ENCODE measurements at regions of chr2 and their contacts with region 1.

Region 1: GRCh38 chr2:143162123-143162837 is 33.1 kb downstream of the ARHGAP15 start:
- DNase-seq: peak in 8 of 9 donors; percentile 9 to 76 (median 67)
- ATAC-seq: peak; percentile 97
- H3K4me3 ChIP-seq: no peak overlapping the region
- H3K4me3 Mint-ChIP-seq: peak overlapping the region in 7 of 10 donors; percentile 0 to 53 (median 6)
- H3K27ac ChIP-seq: peak overlapping the region; percentile 18
- H3K27ac Mint-ChIP-seq: peak overlapping the region in 8 of 9 donors; percentile 50 to 91 (median 82)
- H3K4me1 ChIP-seq: peaks cover 13 to 58% of the 10 kb centered on the region in 2 donors
- H3K4me1 Mint-ChIP-seq: peaks cover 64 to 98% (median 93%) of the 10 kb centered on the region in 7 donors
- H3K27me3 ChIP-seq: no peaks in the 10 kb centered on the region
- H3K27me3 Mint-ChIP-seq: no peaks in the 10 kb centered on the region

Region 2: DNA sequence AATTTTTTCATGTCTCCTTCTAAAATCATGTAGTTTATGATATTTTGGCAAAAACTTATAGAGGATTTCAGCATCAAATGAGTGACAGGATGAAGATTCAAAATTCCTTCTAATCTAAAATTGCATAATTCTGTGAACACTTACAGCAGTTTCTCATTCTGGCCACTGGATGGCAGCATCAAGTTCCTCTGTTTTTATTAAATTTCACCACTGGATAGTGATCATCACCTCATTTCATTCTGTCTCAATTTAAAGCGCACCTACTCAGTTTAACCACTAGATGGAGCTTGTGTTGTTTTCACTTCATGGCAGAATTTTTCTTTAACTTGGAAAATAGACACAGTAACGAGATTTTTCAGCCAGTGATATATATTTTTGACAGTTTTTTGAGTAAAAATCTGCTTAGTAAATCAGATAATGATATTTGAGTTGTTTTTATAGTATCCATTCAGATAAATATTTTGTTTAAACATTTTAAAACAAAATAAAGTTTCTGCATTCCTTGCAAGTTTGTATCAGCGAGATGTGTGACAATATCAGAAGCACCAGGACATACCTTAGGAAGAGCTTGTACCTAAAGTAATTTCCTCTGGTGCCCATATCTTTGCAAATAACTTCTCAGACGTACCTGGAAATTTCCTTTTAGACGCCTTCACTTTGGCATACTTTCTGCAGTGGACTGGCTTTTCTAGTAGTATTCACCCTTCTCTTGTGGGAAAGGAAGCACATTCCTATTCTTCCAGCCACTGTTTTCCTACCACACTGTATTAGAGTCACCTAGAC is 127.8 kb before region 1 on chr2:
- CTCF ChIA-PET with region 1: interaction called, 4 read pairs
- POLR2A ChIA-PET with region 1: no interaction called
- intact Hi-C with region 1: loop called (anchors 1 kb)
- DNase-seq: peak in 7 of 9 donors; percentile 59 to 84 (median 75)
- ATAC-seq: peak; percentile 100
- H3K4me3 ChIP-seq: no peak overlapping the region
- H3K4me3 Mint-ChIP-seq: no peak overlapping the region
- H3K27ac ChIP-seq: no peak overlapping the region
- H3K27ac Mint-ChIP-seq: peak overlapping the region in 1 of 9 donors; percentile 15
- H3K4me1 ChIP-seq: no peaks in the 10 kb centered on the region
- H3K4me1 Mint-ChIP-seq: peaks cover 0 to 9% (median 0%) of the 10 kb centered on the region in 7 donors
- H3K27me3 ChIP-seq: no peaks in the 10 kb centered on the region
- H3K27me3 Mint-ChIP-seq: peaks cover 0 to 8% (median 0%) of the 10 kb centered on the region in 5 donors

Region 3: GRCh38 chr2:143128681-143129580 is 33.3 kb before region 1 on chr2 and contains the start of gene ARHGAP15:
- CTCF ChIA-PET with region 1: interaction called, 35 read pairs
- POLR2A ChIA-PET with region 1: interaction called, 12 read pairs
- intact Hi-C with region 1: loop called (anchors 1 to 5 kb)
- DNase-seq: peak; percentile 31 to 89 (median 83)
- ATAC-seq: peak; percentile 95
- H3K4me3 ChIP-seq: peak within 1 kb of the TSS; percentile 70
- H3K4me3 Mint-ChIP-seq: peak within 1 kb of the TSS; percentile 76 to 91 (median 82)
- H3K27ac ChIP-seq: peak within 1 kb of the TSS; percentile 84
- H3K27ac Mint-ChIP-seq: peak within 1 kb of the TSS in 5 of 9 donors; percentile 85 to 98 (median 98)
- H3K4me1 ChIP-seq: peaks cover 46 to 52% of the 10 kb centered on the region in 2 donors
- H3K4me1 Mint-ChIP-seq: peaks cover 20 to 39% (median 33%) of the 10 kb centered on the region in 7 donors
- H3K27me3 ChIP-seq: no peaks in the 10 kb centered on the region
- H3K27me3 Mint-ChIP-seq: no peaks in the 10 kb centered on the region
- total RNA-seq, gene ARHGAP15: 164 to 218 (median 183) TPM

Region 4: GRCh38 chr2:143177096-143177786 is 15.0 kb after region 1 on chr2:
- CTCF ChIA-PET with region 1: interaction called, 6 read pairs
- POLR2A ChIA-PET with region 1: interaction called, 3 read pairs
- intact Hi-C with region 1: loop called (anchors 1 to 2 kb)
- DNase-seq: peak in 2 of 9 donors; percentile 10 to 14
- ATAC-seq: peak; percentile 71
- H3K4me3 ChIP-seq: peak overlapping the region; percentile 44
- H3K4me3 Mint-ChIP-seq: peak overlapping the region; percentile 64 to 87 (median 82)
- H3K27ac ChIP-seq: peak overlapping the region; percentile 68
- H3K27ac Mint-ChIP-seq: peak overlapping the region; percentile 86 to 96 (median 92)
- H3K4me1 ChIP-seq: peaks cover 13% of the 10 kb centered on the region in 2 donors
- H3K4me1 Mint-ChIP-seq: peaks cover 28 to 82% (median 74%) of the 10 kb centered on the region in 7 donors
- H3K27me3 ChIP-seq: no peaks in the 10 kb centered on the region
- H3K27me3 Mint-ChIP-seq: no peaks in the 10 kb centered on the region

Region 5: GRCh38 chr2:143217512-143218115 is 55.3 kb after region 1 on chr2:
- CTCF ChIA-PET with region 1: interaction called, 14 read pairs
- POLR2A ChIA-PET with region 1: no interaction called
- intact Hi-C with region 1: loop called (anchors 1 kb)
- DNase-seq: no peak
- ATAC-seq: peak; percentile 75
- H3K4me3 ChIP-seq: no peak overlapping the region
- H3K4me3 Mint-ChIP-seq: peak overlapping the region in 3 of 10 donors; percentile 10 to 31 (median 25)
- H3K27ac ChIP-seq: no peak overlapping the region
- H3K27ac Mint-ChIP-seq: peak overlapping the region; percentile 17 to 85 (median 53)
- H3K4me1 ChIP-seq: peaks cover 4 to 5% of the 10 kb centered on the region in 2 donors
- H3K4me1 Mint-ChIP-seq: peaks cover 29 to 81% (median 67%) of the 10 kb centered on the region in 7 donors
- H3K27me3 ChIP-seq: no peaks in the 10 kb centered on the region
- H3K27me3 Mint-ChIP-seq: no peaks in the 10 kb centered on the region

Region 6: GRCh38 chr2:144332356-144333142 is 1170.3 kb after region 1 on chr2:
- CTCF ChIA-PET with region 1: no interaction called
- POLR2A ChIA-PET with region 1: no interaction called
- intact Hi-C with region 1: loop called in 1 of 2 experiments (anchors 5 kb)
- DNase-seq: peak; percentile 65 to 97 (median 85)
- ATAC-seq: peak; percentile 95
- H3K4me3 ChIP-seq: peak overlapping the region; percentile 75
- H3K4me3 Mint-ChIP-seq: peak overlapping the region; percentile 91 to 96 (median 93)
- H3K27ac ChIP-seq: peak overlapping the region; percentile 64
- H3K27ac Mint-ChIP-seq: peak overlapping the region; percentile 54 to 91 (median 87)
- H3K4me1 ChIP-seq: peaks cover 5 to 26% of the 10 kb centered on the region in 2 donors
- H3K4me1 Mint-ChIP-seq: peaks cover 7 to 31% (median 13%) of the 10 kb centered on the region in 7 donors
- H3K27me3 ChIP-seq: no peaks in the 10 kb centered on the region
- H3K27me3 Mint-ChIP-seq: peaks cover 0 to 6% (median 0%) of the 10 kb centered on the region in 5 donors

Measured in naive thymus-derived CD4-positive, alpha-beta T cell (primary cell).